Activated B cell treated with CpG ODN at 0.5 μM for 24 hours (primary cell): ENCODE measurements at regions of chr21 and their contacts with region 1.

Region 1: DNA sequence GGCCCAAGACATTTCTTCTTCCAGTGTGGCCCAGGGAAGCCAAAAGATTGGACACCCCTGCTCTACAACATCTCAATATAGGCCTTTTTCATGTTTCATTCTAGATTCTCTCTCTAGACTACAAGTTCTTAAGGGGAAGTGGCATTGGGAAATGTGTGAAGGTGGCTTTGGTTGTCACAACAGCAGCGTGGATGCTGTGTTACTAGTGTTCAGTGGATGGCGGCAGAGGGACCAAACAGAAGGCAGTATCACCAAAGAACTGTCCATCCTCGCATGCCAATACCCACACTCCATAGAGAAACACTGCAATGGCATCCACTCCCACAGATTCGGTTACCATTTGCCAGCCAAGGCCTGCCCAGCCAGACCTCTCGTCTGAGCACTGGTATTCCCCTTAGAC is 24.3 kb upstream of the IFNAR2 start:
- DNase-seq: no peak
- ATAC-seq: peak; percentile 16
- H3K4me3 Mint-ChIP-seq: peak overlapping the region; percentile 73
- H3K27ac Mint-ChIP-seq: peak overlapping the region; percentile 94
- H3K4me1 Mint-ChIP-seq: peaks cover 53% of the 10 kb centered on the region
- H3K27me3 Mint-ChIP-seq: no peaks in the 10 kb centered on the region
- CTCF ChIP-seq: no peak

Region 2: GRCh38 chr21:33229784-33230544 is 24.5 kb after region 1 on chr21 and contains the start of gene IFNAR2:
- CTCF ChIA-PET with region 1: no interaction called
- POLR2A ChIA-PET with region 1: interaction called, 7 read pairs
- intact Hi-C with region 1: loop called (anchors 1 kb)
- DNase-seq: peak; percentile 77
- ATAC-seq: peak; percentile 88
- H3K4me3 Mint-ChIP-seq: peak within 1 kb of the TSS; percentile 92
- H3K27ac Mint-ChIP-seq: peak within 1 kb of the TSS; percentile 86
- H3K4me1 Mint-ChIP-seq: peaks cover 47% of the 10 kb centered on the region
- H3K27me3 Mint-ChIP-seq: no peaks in the 10 kb centered on the region
- CTCF ChIP-seq: no peak
- total RNA-seq, gene IFNAR2: 24.9 and 29.2 TPM in 2 replicates

Region 3: DNA sequence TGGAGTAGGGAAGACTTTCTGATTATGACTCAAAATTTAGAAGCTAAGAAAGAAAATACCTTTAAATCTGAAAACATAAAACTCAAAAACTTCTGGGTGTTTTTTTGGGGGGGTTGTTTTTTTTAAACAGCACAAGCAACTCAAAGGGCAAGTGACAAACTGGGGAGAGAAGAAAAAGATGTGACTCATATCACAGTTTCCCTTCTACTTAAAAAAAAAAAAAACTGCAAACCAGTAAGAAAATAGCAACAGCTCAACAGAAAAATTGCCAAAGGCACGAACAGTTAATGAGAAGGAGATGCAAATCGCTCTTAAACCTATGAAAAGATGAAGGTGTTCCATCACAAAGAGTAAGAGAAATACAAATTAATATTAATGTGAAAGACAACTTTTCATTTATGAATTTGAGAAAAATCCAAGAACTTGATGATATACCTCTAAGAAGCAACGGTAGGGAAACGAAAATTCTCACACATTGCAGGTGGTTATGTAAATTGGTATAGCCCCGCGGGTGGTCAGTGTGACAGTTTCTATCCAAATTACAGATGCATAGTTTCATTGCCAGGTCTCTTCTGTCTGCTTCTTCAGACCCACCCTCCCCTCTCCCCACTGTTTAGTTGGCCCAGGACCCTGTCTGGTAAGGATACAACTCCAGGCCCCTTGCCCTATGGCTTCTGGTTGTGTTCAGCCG is 33.2 kb after region 1 on chr21:
- CTCF ChIA-PET with region 1: no interaction called
- POLR2A ChIA-PET with region 1: interaction called, 11 read pairs
- intact Hi-C with region 1: loop called (anchors 2 kb)
- DNase-seq: no peak
- ATAC-seq: peak; percentile 71
- H3K4me3 Mint-ChIP-seq: peak overlapping the region; percentile 66
- H3K27ac Mint-ChIP-seq: peak overlapping the region; percentile 89
- H3K4me1 Mint-ChIP-seq: peaks cover 57% of the 10 kb centered on the region
- H3K27me3 Mint-ChIP-seq: no peaks in the 10 kb centered on the region
- CTCF ChIP-seq: no peak